ENCODE measurements at regions of chr21 and their contacts with region 1.

Region 1: DNA sequence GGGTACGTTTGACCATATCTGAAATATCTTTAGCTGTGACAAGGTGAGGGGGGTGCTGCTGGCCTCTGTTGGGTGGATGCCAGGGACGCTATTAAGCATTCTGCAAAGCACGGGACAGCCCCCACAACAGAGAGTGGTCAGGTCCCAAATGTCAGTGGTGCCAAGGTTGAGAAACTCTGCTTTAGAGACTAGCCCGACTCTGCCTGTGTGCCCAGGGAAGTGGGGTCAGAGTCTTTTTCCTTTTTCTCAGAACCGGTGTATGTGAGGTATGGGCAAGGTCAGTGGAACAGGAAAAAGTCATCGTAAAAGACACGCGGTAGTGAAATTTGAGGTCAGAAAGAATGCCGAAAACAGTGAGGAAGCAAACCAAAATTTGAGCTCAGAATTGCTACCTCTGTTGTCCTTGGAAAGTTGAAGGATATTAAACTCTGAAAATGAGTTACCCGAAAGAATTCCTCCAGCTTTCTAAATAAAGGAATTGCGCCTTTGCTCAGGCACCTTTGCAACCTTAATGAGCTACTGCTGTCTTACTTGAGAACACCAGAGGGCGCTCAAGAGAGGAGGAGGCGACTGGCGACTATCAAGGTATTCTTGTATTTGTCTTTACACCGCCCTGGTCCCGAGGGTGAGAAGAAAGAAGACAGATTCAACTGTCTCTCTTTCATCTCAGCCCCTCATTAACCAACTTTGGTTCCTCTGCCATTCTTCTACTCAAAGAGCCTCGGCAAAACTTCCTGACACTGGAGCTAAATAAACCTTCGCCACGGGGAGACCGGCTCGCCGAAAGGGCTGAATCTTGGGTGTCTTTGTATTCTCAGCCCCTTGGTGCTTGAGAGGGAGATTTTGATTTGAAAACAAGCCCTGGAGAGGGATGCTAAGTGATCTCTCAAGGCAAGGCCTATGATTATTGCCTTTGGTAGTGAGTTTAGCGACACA is 85.4 kb upstream of the OLIG2 start:
- DNase-seq: no peak
- H3K4me3 ChIP-seq: no peak overlapping the region
- H3K27ac ChIP-seq: no peak overlapping the region
- H3K4me1 ChIP-seq: peaks cover 0 to 2% (median 0%) of the 10 kb centered on the region in 4 experiments; a peak in 1 of 7 replicates
- H3K27me3 ChIP-seq: no peaks in the 10 kb centered on the region; a peak in 1 of 7 replicates
- CTCF ChIP-seq: peak; percentile 45 to 84 (median 82)
- EP300 ChIP-seq: no peak
- POLR2A ChIP-seq: no peak
- RAD21 ChIP-seq: peak; percentile 79 to 88

Region 2: GRCh38 chr21:32921632-32922230 is 18.6 kb before region 1 on chr21:
- CTCF ChIA-PET with region 1: interaction called, 41 read pairs
- POLR2A ChIA-PET with region 1: no interaction called
- DNase-seq: peak; percentile 23 to 80
- H3K4me3 ChIP-seq: no peak overlapping the region
- H3K27ac ChIP-seq: no peak overlapping the region
- H3K4me1 ChIP-seq: peaks cover 0 to 10% (median 4%) of the 10 kb centered on the region in 4 experiments; a peak in 2 of 7 replicates
- H3K27me3 ChIP-seq: no peaks in the 10 kb centered on the region
- CTCF ChIP-seq: peak; percentile 67 to 86 (median 84)
- EP300 ChIP-seq: no peak
- POLR2A ChIP-seq: no peak
- RAD21 ChIP-seq: peak; percentile 45 to 67

Region 3: DNA sequence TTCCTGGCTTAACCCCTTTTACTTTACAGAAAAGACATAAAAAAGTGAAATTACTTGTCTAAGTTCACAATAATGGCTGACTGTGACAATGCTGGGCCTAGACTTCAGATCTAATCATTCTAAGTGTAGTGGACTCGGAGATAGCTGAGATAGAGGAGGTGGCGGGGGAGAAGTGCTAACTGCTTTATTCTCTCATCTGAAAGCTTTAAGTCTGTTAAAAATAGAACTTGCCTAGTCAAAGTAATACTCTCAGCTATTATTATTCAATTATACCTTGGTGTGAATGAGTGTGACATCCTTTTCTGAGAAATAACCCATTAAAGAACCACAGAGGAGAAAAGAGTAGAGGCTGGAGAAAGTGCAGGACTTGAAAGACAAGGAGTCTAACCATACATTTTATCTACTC is 10.7 kb before region 1 on chr21:
- CTCF ChIA-PET with region 1: interaction called, 17 read pairs
- POLR2A ChIA-PET with region 1: no interaction called
- DNase-seq: no peak
- H3K4me3 ChIP-seq: no peak overlapping the region
- H3K27ac ChIP-seq: no peak overlapping the region
- H3K4me1 ChIP-seq: peaks cover 0 to 3% (median 0%) of the 10 kb centered on the region in 4 experiments; a peak in 1 of 7 replicates
- H3K27me3 ChIP-seq: no peaks in the 10 kb centered on the region; a peak in 1 of 7 replicates
- CTCF ChIP-seq: no peak
- EP300 ChIP-seq: no peak
- POLR2A ChIP-seq: no peak
- RAD21 ChIP-seq: no peak

Region 4: GRCh38 chr21:32962268-32962667 is 21.9 kb after region 1 on chr21:
- CTCF ChIA-PET with region 1: interaction called, 14 read pairs
- POLR2A ChIA-PET with region 1: no interaction called
- DNase-seq: no peak
- H3K4me3 ChIP-seq: no peak overlapping the region
- H3K27ac ChIP-seq: no peak overlapping the region
- H3K4me1 ChIP-seq: peaks cover 0 to 14% (median 1%) of the 10 kb centered on the region in 4 experiments; a peak in 3 of 7 replicates
- H3K27me3 ChIP-seq: no peaks in the 10 kb centered on the region; a peak in 1 of 7 replicates
- CTCF ChIP-seq: no peak
- EP300 ChIP-seq: no peak
- POLR2A ChIP-seq: no peak
- RAD21 ChIP-seq: no peak

Region 5: GRCh38 chr21:32994305-32994704 is 54.0 kb after region 1 on chr21:
- CTCF ChIA-PET with region 1: interaction called, 20 read pairs
- POLR2A ChIA-PET with region 1: no interaction called
- DNase-seq: no peak
- H3K4me3 ChIP-seq: no peak overlapping the region
- H3K27ac ChIP-seq: no peak overlapping the region
- H3K4me1 ChIP-seq: peaks cover 0 to 3% (median 1%) of the 10 kb centered on the region in 4 experiments; a peak in 2 of 7 replicates
- H3K27me3 ChIP-seq: no peaks in the 10 kb centered on the region; a peak in 1 of 7 replicates
- CTCF ChIP-seq: peak in 2 of 3 experiments; percentile 43 to 54; a peak in 2 of 4 replicates
- EP300 ChIP-seq: no peak
- POLR2A ChIP-seq: no peak
- RAD21 ChIP-seq: peak; percentile 66 to 69

Region 6: GRCh38 chr21:33025489-33026442 is 85.4 kb after region 1 on chr21 and contains the start of gene OLIG2:
- CTCF ChIA-PET with region 1: interaction called, 18 read pairs
- POLR2A ChIA-PET with region 1: no interaction called
- DNase-seq: peak; percentile 72 to 93
- H3K4me3 ChIP-seq: peak within 1 kb of the TSS; percentile 54 to 70 (median 56)
- H3K27ac ChIP-seq: no peak within 1 kb of the TSS
- H3K4me1 ChIP-seq: peaks cover 6 to 35% (median 24%) of the 10 kb centered on the region in 4 experiments
- H3K27me3 ChIP-seq: peaks cover 90 to 99% (median 98%) of the 10 kb centered on the region in 4 experiments
- CTCF ChIP-seq: no peak
- EP300 ChIP-seq: no peak
- POLR2A ChIP-seq: no peak
- RAD21 ChIP-seq: no peak
- total RNA-seq, gene OLIG2: 0.11 TPM in 1 of 2 replicates, not detected in the other

Region 7: GRCh38 chr21:33199516-33200217 is 259.3 kb after region 1 on chr21:
- CTCF ChIA-PET with region 1: interaction called, 18 read pairs
- POLR2A ChIA-PET with region 1: no interaction called
- DNase-seq: peak in 1 of 2 experiments; percentile 71
- H3K4me3 ChIP-seq: no peak overlapping the region
- H3K27ac ChIP-seq: no peak overlapping the region
- H3K4me1 ChIP-seq: peaks cover 0 to 8% (median 2%) of the 10 kb centered on the region in 4 experiments; a peak in 4 of 7 replicates
- H3K27me3 ChIP-seq: no peaks in the 10 kb centered on the region; a peak in 1 of 7 replicates
- CTCF ChIP-seq: peak in 2 of 3 experiments; percentile 73 to 82; a peak in 3 of 4 replicates
- EP300 ChIP-seq: no peak
- POLR2A ChIP-seq: no peak
- RAD21 ChIP-seq: peak; percentile 95 to 96